BJ (cell line): ENCODE measurements at regions of chr6 and their contacts with region 1.

Region 1: DNA sequence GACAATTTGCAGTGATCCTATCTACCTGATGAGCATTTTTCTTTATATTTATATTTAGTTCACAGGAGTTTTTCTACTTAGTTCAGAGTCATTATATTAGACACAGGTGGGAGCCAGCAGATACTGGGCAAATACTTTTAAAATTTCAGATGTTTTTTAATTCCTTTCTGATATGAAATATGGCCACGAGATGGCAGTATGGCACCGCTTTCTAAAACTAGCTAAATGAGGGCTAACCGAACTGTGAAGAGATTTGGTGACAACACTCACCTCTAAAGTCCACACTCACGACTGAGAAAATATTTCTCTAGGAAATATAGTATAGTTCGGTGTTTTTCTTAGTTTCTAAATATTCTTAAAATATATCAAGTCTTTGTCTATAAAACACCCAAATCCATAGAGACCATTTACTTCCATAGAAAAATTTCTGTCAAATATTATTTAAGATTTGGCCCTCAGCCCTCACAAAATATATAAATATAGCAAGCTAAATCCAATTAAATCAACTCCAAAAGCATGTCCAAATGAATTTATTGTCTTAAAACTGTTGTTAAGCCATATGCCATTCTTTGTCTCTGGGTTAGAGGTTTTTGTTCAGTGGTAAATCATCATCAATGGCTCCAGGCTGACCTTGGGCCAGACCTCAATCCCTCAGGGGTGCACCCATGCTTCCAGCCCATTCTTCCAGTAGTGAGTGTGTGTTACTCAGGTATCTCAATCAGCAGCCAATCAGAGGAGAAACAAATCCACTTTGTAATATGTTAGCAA is 63.6 kb downstream of the HUS1B start:
- DNase-seq: no peak
- H3K4me3 ChIP-seq: no peak overlapping the region
- H3K27me3 ChIP-seq: no peaks in the 10 kb centered on the region
- CTCF ChIP-seq: peak; percentile 55

Region 2: DNA sequence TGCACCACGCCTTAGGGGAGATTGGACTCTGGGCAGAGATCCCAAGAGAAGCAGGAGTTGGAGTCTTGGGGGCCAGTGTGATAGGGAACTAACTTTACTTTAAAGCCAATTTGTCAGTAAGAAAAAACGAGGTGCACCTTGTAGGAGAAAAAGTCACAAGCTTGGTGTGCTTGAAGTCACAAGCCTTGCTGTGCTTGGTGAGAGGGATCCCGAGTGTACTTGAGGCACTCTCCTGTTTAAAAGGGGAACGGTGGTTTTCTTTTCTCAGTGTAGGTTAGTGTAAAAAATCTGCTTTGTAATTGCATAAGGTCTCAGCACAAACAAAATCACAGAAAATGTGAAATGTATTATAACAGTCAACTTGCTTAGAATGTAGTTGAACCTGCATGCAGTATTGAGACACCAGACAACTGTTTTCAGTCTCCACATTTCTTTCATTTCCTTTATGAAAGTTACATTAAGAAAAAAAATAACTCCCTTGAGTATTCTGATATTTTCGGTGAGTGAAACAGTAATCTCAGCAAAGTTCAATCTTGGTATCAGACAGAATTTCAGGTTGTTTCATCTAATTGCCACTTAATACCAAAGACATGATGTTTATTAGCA is 412.2 kb before region 1 on chr6:
- CTCF ChIA-PET with region 1: no interaction called
- POLR2A ChIA-PET with region 1: no interaction called
- DNase-seq: no peak
- H3K4me3 ChIP-seq: no peak overlapping the region
- H3K27me3 ChIP-seq: no peaks in the 10 kb centered on the region
- CTCF ChIP-seq: no peak

Region 3: DNA sequence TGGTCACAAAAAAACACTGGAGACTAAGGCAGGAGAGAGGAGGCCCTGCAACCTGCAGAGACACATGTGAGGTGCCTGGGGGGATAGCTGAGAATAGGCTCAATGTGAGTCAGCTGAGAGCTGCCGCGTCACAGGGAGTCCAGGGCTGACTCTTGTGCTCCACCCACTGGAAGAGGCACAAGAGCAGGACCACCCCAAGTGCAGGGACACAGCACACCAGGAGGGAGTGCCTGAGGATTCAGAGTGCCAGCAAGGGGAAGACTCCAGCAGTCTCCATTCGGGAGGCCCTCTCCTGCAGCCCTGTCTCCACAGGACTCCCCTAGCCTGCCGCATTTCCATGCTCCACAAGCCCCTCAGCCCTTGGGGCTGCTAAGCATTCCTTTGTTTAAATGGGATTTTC is 41.9 kb before region 1 on chr6:
- CTCF ChIA-PET with region 1: no interaction called
- POLR2A ChIA-PET with region 1: no interaction called
- DNase-seq: peak; percentile 22
- H3K4me3 ChIP-seq: no peak overlapping the region
- H3K27me3 ChIP-seq: no peaks in the 10 kb centered on the region
- CTCF ChIP-seq: peak; percentile 43

Region 4: DNA sequence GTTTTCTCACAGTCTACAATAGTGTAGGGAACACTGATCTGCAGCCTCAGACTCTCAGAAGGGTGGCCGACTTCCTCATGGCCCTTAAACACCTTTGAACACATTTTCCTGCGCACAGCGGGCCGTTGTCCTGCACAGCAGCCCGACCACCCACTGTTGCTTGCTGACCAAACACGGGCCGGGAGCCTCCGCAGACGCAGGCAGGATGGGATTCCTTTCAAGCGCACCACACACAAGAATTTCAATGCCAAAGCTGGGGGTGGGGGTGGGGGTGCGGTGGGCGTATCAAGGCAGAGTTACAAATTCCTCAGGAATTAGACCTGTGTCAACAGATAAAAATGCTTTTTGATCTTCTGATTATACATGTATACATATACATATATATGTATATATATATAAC is 11.0 kb before region 1 on chr6:
- CTCF ChIA-PET with region 1: interaction called, 18 read pairs
- POLR2A ChIA-PET with region 1: no interaction called
- DNase-seq: no peak
- H3K4me3 ChIP-seq: no peak overlapping the region
- H3K27me3 ChIP-seq: no peaks in the 10 kb centered on the region
- CTCF ChIP-seq: no peak

Region 5: GRCh38 chr6:617445-618100 is 24.2 kb after region 1 on chr6:
- CTCF ChIA-PET with region 1: interaction called, 10 read pairs
- POLR2A ChIA-PET with region 1: no interaction called
- DNase-seq: no peak
- H3K4me3 ChIP-seq: no peak overlapping the region
- H3K27me3 ChIP-seq: no peaks in the 10 kb centered on the region
- CTCF ChIP-seq: no peak

Region 6: GRCh38 chr6:1424306-1424928 is 831.1 kb after region 1 on chr6:
- CTCF ChIA-PET with region 1: interaction called, 16 read pairs
- POLR2A ChIA-PET with region 1: no interaction called
- DNase-seq: no peak
- H3K4me3 ChIP-seq: no peak overlapping the region
- H3K27me3 ChIP-seq: peaks cover 2% of the 10 kb centered on the region; the same call in 1 of the 2 replicates
- CTCF ChIP-seq: peak; percentile 81

Region 7: DNA sequence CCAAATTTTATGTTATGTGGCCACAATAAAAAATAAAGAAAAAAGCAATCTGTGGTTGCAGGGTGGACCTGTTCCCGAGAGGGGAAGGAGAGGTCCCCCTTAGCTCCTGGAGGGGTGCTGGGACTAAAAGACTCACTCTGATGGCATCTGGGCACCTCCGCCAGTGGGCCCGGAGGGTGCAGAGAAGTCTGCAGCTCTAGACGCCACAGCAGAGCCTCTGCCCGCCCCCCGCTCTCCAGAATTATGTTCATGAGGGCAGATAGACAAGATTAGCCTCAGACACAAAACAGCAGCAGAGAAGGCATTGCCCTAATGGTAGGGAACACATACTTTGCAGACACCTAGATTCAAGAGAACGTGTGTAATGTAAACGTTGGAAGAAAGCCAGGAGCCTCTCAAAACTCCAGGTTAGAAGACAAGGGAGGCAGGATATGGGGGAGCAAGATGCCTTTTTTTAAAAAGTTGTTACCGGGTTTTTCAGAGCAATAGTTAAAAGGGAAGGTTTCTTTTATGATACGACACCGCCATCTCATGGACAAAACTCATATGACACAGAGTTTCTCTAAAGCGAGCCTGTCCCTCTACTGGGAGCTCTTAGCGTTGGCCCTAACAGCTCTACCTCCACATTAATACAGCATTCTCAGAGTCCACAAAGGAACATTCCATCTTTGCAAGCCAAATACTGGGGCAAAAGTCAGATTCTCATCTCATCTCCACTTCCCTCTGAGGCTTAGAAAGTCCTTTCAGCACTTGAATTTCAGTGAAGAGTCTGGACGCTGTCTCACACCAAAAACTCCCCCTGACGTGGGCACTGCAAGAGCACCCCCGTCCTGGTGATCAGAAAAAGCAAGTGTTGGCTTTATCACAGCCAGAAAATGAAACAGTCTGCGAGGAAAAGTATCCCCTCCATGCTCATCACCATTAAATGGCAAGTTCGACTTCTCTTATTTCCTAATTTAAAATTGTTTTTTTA is 843.3 kb after region 1 on chr6:
- CTCF ChIA-PET with region 1: interaction called, 32 read pairs
- POLR2A ChIA-PET with region 1: no interaction called
- DNase-seq: peak; percentile 23
- H3K4me3 ChIP-seq: no peak overlapping the region
- H3K27me3 ChIP-seq: no peaks in the 10 kb centered on the region
- CTCF ChIP-seq: peak; percentile 73